Activated naive CD4-positive, alpha-beta T cell treated with anti-CD3 and anti-CD28 coated beads for 36 hours (primary cell): ENCODE measurements at regions of chr1 and their contacts with region 1.

Region 1: GRCh38 chr1:89855413-89856123 is 34.7 kb downstream of the LRRC8D start:
- DNase-seq: no peak
- H3K4me3 Mint-ChIP-seq: peak overlapping the region; percentile 44
- H3K27ac Mint-ChIP-seq: no peak overlapping the region
- H3K4me1 Mint-ChIP-seq: peaks cover 11% of the 10 kb centered on the region
- H3K27me3 Mint-ChIP-seq: no peaks in the 10 kb centered on the region

Region 2: DNA sequence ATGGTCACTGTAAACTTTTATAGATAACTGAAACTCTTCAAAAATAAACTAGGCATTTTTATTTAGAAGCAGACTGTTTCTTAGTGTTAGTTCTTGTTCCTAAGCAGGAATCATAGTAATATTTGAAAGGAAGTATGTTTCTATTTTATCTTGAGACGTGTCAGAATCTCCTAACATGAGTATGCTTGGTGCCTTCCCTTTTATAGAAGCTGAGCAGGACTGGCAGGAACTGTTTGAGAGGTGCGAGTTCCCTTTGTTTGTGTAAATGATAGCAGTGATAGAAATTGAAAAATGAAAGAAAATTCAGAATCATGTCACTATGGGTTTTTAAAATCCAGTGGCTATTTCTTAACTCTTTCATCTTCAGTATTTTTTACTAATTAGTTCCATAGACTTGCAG is 22.2 kb after region 1 on chr1:
- CTCF ChIA-PET with region 1: interaction called, 3 read pairs
- intact Hi-C with region 1: loop called (anchors 1 kb)
- DNase-seq: peak; percentile 27
- H3K4me3 Mint-ChIP-seq: no peak overlapping the region
- H3K27ac Mint-ChIP-seq: no peak overlapping the region
- H3K4me1 Mint-ChIP-seq: peaks cover 47% of the 10 kb centered on the region
- H3K27me3 Mint-ChIP-seq: no peaks in the 10 kb centered on the region

Region 3: GRCh38 chr1:89908672-89909436 is 53.3 kb after region 1 on chr1:
- CTCF ChIA-PET with region 1: no interaction called
- intact Hi-C with region 1: loop called (anchors 1 kb)
- DNase-seq: peak; percentile 25
- H3K4me3 Mint-ChIP-seq: no peak overlapping the region
- H3K27ac Mint-ChIP-seq: peak overlapping the region; percentile 71
- H3K4me1 Mint-ChIP-seq: peaks cover 47% of the 10 kb centered on the region
- H3K27me3 Mint-ChIP-seq: no peaks in the 10 kb centered on the region